K562 (cell line): ENCODE measurements at regions of chr18 and their contacts with region 1.

Region 1: GRCh38 chr18:9971313-9971920 is 57.6 kb downstream of the VAPA start:
- DNase-seq: peak; percentile 77 to 91 (median 80)
- ATAC-seq: peak; percentile 89
- H3K4me3 ChIP-seq: no peak overlapping the region
- H3K27ac ChIP-seq: no peak overlapping the region
- H3K4me1 ChIP-seq: peaks cover under 1 to 12% of the 10 kb centered on the region in 2 experiments; a peak in 4 of 5 replicates
- H3K27me3 ChIP-seq: no peaks in the 10 kb centered on the region
- CTCF ChIP-seq: peak; percentile 81 to 96 (median 85)
- EP300 ChIP-seq: no peak
- POLR2A ChIP-seq: no peak
- RAD21 ChIP-seq: peak; percentile 95 to 98

Region 2: GRCh38 chr18:9683407-9684396 is 287.7 kb before region 1 on chr18:
- CTCF ChIA-PET with region 1: no interaction called
- POLR2A ChIA-PET with region 1: interaction called, 4 read pairs
- in situ Hi-C with region 1: no loop called
- intact Hi-C with region 1: loop called (anchors 5 kb)
- DNase-seq: peak in 3 of 4 experiments; percentile 51 to 91 (median 63)
- ATAC-seq: peak; percentile 91
- H3K4me3 ChIP-seq: no peak overlapping the region
- H3K27ac ChIP-seq: peak overlapping the region; percentile 81
- H3K4me1 ChIP-seq: peaks cover 10 to 49% of the 10 kb centered on the region in 2 experiments; a peak in 4 of 5 replicates
- H3K27me3 ChIP-seq: no peaks in the 10 kb centered on the region
- CTCF ChIP-seq: peak; percentile 76 to 86 (median 81)
- EP300 ChIP-seq: 0 out of 2 replicates have a peak, but pooled peaks have one; percentile 15
- POLR2A ChIP-seq: no peak
- RAD21 ChIP-seq: peak; percentile 95 to 97

Region 3: DNA sequence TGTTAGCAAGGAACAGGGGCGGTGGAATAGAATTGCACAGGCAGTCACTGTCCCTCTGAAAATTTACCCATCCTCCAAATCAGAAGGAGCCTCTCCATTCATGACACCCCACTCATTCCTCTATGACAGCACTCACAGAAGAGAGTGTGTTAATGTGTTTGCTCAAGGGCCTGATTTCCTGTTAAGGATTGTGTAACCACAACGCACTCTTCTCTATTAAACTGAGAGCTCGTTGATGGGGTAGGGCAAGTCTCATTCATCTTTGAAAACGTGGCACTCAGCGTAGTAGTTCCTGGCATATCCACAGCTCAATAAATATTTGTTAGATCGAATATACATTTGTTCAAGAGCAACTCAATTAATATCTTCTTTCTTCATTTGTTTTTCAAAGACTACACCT is 48.8 kb after region 1 on chr18:
- CTCF ChIA-PET with region 1: no interaction called
- POLR2A ChIA-PET with region 1: no interaction called
- in situ Hi-C with region 1: no loop called
- intact Hi-C with region 1: loop called (anchors 5 kb)
- DNase-seq: no peak
- ATAC-seq: no peak
- H3K4me3 ChIP-seq: no peak overlapping the region
- H3K27ac ChIP-seq: no peak overlapping the region
- H3K4me1 ChIP-seq: no peaks in the 10 kb centered on the region
- H3K27me3 ChIP-seq: peaks cover 35 to 36% of the 10 kb centered on the region in 2 experiments
- CTCF ChIP-seq: no peak
- EP300 ChIP-seq: no peak
- POLR2A ChIP-seq: no peak
- RAD21 ChIP-seq: no peak

Region 4: DNA sequence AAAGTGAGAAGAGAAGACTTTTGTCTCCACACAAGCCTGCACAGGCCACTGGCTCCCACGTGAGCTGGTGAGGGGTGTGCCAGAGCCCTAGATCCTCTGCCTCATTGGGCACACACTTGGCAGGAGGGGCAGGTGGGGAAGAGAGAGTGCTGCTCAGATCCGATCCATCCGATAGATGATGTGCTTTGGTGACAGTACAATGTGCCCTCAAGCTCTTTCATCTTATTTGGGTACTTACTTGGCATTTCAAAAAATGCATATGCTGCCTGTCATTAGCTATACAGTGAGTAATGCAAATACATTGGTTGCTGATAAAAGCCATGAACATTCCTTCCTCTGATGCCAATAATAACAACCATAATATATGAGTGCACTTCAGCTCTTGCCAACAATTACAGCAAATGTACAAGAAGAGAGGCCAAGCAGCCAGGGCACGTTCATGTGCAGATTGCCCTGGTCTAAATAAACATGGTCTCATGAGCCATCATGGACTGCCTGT is 197.7 kb after region 1 on chr18:
- CTCF ChIA-PET with region 1: no interaction called
- POLR2A ChIA-PET with region 1: no interaction called
- in situ Hi-C with region 1: no loop called
- intact Hi-C with region 1: loop called (anchors 10 kb)
- DNase-seq: no peak
- ATAC-seq: no peak
- H3K4me3 ChIP-seq: no peak overlapping the region
- H3K27ac ChIP-seq: no peak overlapping the region
- H3K4me1 ChIP-seq: no peaks in the 10 kb centered on the region
- H3K27me3 ChIP-seq: peaks cover 25 to 42% of the 10 kb centered on the region in 2 experiments
- CTCF ChIP-seq: no peak
- EP300 ChIP-seq: no peak
- POLR2A ChIP-seq: no peak
- RAD21 ChIP-seq: no peak

Region 5: GRCh38 chr18:10247021-10247741 is 275.8 kb after region 1 on chr18:
- CTCF ChIA-PET with region 1: no interaction called
- POLR2A ChIA-PET with region 1: no interaction called
- in situ Hi-C with region 1: no loop called
- intact Hi-C with region 1: loop called (anchors 10 kb)
- DNase-seq: no peak
- ATAC-seq: no peak; the same call in 2 of the 3 replicates
- H3K4me3 ChIP-seq: no peak overlapping the region
- H3K27ac ChIP-seq: no peak overlapping the region
- H3K4me1 ChIP-seq: no peaks in the 10 kb centered on the region
- H3K27me3 ChIP-seq: peaks cover 49 to 56% of the 10 kb centered on the region in 2 experiments
- CTCF ChIP-seq: no peak
- EP300 ChIP-seq: no peak
- POLR2A ChIP-seq: no peak
- RAD21 ChIP-seq: no peak

Region 6: DNA sequence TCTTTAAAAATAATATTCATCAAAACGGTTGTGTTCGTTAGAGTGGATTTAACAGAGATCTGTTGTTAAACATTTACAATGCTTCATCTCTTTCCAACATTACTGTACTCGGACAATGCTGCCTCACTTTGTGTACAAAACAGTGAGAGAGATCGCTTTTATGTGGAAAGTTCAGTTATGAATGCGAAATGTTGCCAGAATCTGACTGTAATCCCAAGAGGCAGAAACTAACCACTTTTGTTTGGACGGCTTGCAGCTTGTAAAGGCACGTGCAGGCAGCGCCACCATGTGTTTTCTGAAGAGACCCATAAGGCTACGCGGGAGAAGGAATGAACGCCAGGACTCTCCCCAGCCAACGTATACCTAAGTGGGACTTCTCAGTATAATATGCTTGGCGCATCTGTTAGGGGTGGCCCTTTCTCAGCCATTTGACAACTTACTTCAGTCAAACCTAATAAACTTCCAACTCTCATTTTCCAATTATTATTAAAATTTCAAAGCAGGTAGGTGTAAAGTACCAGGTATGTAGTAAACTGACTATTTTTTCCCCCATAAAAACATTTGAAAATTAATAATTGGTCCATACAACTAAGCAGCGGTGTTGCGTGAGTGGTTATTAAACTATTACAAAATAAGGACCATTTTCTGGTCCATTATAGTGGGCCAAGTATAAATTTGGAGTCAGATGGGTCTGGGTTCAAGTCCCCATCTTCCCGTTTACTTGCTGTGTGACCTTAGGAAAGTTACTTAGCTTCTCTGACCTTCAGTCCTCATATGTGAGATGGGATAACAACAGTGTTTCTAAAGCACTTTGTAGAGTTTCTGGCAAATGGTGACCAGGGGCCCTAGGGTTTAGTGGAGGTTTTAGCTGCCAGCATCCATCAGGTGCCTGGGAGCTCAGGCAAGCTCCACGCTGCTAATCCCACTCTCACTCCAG is 548.9 kb after region 1 on chr18:
- CTCF ChIA-PET with region 1: interaction called, 12 read pairs
- POLR2A ChIA-PET with region 1: no interaction called
- in situ Hi-C with region 1: loop called (anchors 5 kb)
- intact Hi-C with region 1: loop called (anchors 1 kb)
- DNase-seq: peak; percentile 72 to 89 (median 74)
- ATAC-seq: peak; percentile 97
- H3K4me3 ChIP-seq: no peak overlapping the region
- H3K27ac ChIP-seq: no peak overlapping the region
- H3K4me1 ChIP-seq: peaks cover 0 to 4% of the 10 kb centered on the region in 2 experiments; a peak in 1 of 5 replicates
- H3K27me3 ChIP-seq: peaks cover 13 to 33% of the 10 kb centered on the region in 2 experiments; a peak in 4 of 5 replicates
- CTCF ChIP-seq: peak; percentile 86 to 92 (median 90)
- EP300 ChIP-seq: no peak
- POLR2A ChIP-seq: no peak
- RAD21 ChIP-seq: peak; percentile 93 to 97